Naive thymus-derived CD4-positive, alpha-beta T cell (primary cell): ENCODE measurements at regions of chr6 and their contacts with region 1.

Region 1: DNA sequence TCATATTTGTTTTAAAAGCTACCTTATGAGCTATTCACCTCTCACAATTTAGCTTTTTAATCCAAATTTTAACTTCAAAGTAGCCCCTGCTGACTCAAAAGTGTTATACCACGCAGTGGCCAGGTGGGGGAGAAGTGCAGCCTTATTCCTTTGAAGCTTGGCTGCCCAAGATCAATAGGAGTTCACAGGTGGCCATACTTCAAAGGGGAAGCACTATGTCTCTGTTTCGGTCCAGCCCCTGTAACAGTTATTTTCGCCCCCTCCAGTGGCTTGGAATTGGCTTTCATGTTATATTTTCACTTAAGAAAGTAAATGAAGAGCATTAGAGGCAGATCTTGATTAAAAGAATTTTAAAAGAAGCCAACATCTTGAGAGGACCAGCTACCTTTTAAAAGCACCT is 608.4 kb downstream of the EPHA7 start:
- DNase-seq: no peak
- ATAC-seq: no peak
- H3K4me3 ChIP-seq: no peak overlapping the region
- H3K4me3 Mint-ChIP-seq: no peak overlapping the region
- H3K27ac ChIP-seq: no peak overlapping the region
- H3K27ac Mint-ChIP-seq: no peak overlapping the region
- H3K4me1 ChIP-seq: no peaks in the 10 kb centered on the region
- H3K4me1 Mint-ChIP-seq: no peaks in the 10 kb centered on the region
- H3K27me3 ChIP-seq: no peaks in the 10 kb centered on the region
- H3K27me3 Mint-ChIP-seq: no peaks in the 10 kb centered on the region

Region 2: GRCh38 chr6:91886183-91886795 is 924.6 kb before region 1 on chr6:
- CTCF ChIA-PET with region 1: no interaction called
- POLR2A ChIA-PET with region 1: no interaction called
- intact Hi-C with region 1: no loop called
- DNase-seq: no peak
- ATAC-seq: no peak
- H3K4me3 ChIP-seq: no peak overlapping the region
- H3K4me3 Mint-ChIP-seq: no peak overlapping the region
- H3K27ac ChIP-seq: no peak overlapping the region
- H3K27ac Mint-ChIP-seq: no peak overlapping the region
- H3K4me1 ChIP-seq: no peaks in the 10 kb centered on the region
- H3K4me1 Mint-ChIP-seq: no peaks in the 10 kb centered on the region
- H3K27me3 ChIP-seq: no peaks in the 10 kb centered on the region
- H3K27me3 Mint-ChIP-seq: no peaks in the 10 kb centered on the region

Region 3: GRCh38 chr6:93235775-93236174 is 424.9 kb after region 1 on chr6:
- CTCF ChIA-PET with region 1: no interaction called
- POLR2A ChIA-PET with region 1: no interaction called
- intact Hi-C with region 1: no loop called
- DNase-seq: no peak
- ATAC-seq: no peak
- H3K4me3 ChIP-seq: no peak overlapping the region
- H3K4me3 Mint-ChIP-seq: no peak overlapping the region
- H3K27ac ChIP-seq: no peak overlapping the region
- H3K27ac Mint-ChIP-seq: no peak overlapping the region
- H3K4me1 ChIP-seq: no peaks in the 10 kb centered on the region
- H3K4me1 Mint-ChIP-seq: no peaks in the 10 kb centered on the region
- H3K27me3 ChIP-seq: no peaks in the 10 kb centered on the region
- H3K27me3 Mint-ChIP-seq: no peaks in the 10 kb centered on the region

Region 4: GRCh38 chr6:93419304-93420162 is 608.6 kb after region 1 on chr6 and contains the start of gene EPHA7:
- CTCF ChIA-PET with region 1: no interaction called
- POLR2A ChIA-PET with region 1: no interaction called
- intact Hi-C with region 1: loop called in 1 of 2 experiments (anchors 10 kb)
- DNase-seq: peak in 4 of 9 donors; percentile 6 to 60 (median 8)
- ATAC-seq: peak; percentile 60
- H3K4me3 ChIP-seq: no peak within 1 kb of the TSS
- H3K4me3 Mint-ChIP-seq: peak within 1 kb of the TSS; percentile 72 to 90 (median 81)
- H3K27ac ChIP-seq: no peak within 1 kb of the TSS
- H3K27ac Mint-ChIP-seq: no peak within 1 kb of the TSS
- H3K4me1 ChIP-seq: no peaks in the 10 kb centered on the region
- H3K4me1 Mint-ChIP-seq: peaks cover 0 to 33% (median 30%) of the 10 kb centered on the region in 7 donors
- H3K27me3 ChIP-seq: peaks cover 0 to 5% of the 10 kb centered on the region in 2 donors
- H3K27me3 Mint-ChIP-seq: peaks cover 43 to 63% (median 59%) of the 10 kb centered on the region in 5 donors
- total RNA-seq, gene EPHA7: not detected